ENCODE measurements at regions of chr16 and their contacts with region 1.

Region 1: DNA sequence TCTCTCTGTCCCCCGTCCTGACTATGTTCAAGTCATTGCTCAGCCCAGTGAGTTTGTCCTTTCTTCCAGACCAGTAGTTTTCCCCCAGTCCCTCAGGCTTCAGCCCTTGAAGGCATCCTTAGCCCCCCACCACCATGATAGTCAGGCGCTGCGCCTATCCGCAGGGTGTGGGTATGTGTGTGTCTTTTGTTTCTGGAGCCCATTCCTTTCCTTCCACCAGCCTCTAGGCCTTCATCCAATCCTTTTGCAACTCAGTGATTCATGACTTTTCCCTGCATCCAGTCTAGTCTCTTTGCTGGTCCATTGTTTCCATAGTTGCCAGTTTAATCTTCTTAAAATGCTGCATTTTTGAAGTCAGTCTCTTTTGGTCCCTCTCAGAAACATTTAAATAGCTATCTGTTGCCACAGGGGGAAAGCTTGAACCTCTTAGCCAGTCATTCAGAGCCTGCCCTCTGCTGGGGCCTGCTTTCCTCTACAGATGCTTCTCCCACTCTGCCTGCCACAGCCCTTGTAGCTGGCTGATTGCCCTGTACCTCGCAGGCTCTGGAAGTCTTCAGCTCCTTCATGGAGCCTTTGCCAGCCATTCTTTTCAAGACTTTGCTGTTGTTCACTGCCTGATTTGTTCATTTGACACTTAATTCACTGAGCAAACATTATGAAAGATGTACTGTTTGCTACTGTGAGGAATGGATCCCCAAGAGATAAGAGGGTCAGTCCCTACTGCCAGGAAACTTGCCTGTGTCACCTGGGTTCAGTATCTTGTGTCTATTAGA is 55.9 kb upstream of the ADCY7 start:
- DNase-seq: peak; percentile 87
- ATAC-seq: peak; percentile 91
- H3K4me3 ChIP-seq: no peak overlapping the region
- H3K27ac ChIP-seq: no peak overlapping the region
- H3K4me1 ChIP-seq: peaks cover 13% of the 10 kb centered on the region
- H3K27me3 ChIP-seq: no peaks in the 10 kb centered on the region
- CTCF ChIP-seq: peak; percentile 87
- POLR2A ChIP-seq: no peak
- RAD21 ChIP-seq: peak; percentile 87

Region 2: GRCh38 chr16:50024684-50025536 is 185.5 kb before region 1 on chr16 and contains the start of gene CNEP1R1:
- CTCF ChIA-PET with region 1: interaction called, 54 read pairs
- POLR2A ChIA-PET with region 1: no interaction called
- dilution Hi-C with region 1: no loop called
- in situ Hi-C with region 1: no loop called
- intact Hi-C with region 1: loop called (anchors 1 kb)
- DNase-seq: peak; percentile 95
- ATAC-seq: peak; percentile 97
- H3K4me3 ChIP-seq: peak within 1 kb of the TSS; percentile 100
- H3K27ac ChIP-seq: peak within 1 kb of the TSS; percentile 34
- H3K4me1 ChIP-seq: no peaks in the 10 kb centered on the region
- H3K27me3 ChIP-seq: peaks cover 4% of the 10 kb centered on the region; the same call in 1 of the 2 replicates
- CTCF ChIP-seq: peak; percentile 99
- POLR2A ChIP-seq: peak; percentile 45; the same call in 1 of the 2 replicates
- RAD21 ChIP-seq: peak; percentile 94
- total RNA-seq, gene CNEP1R1: 22.0 and 38.6 TPM in 2 replicates

Region 3: GRCh38 chr16:50152807-50153452 is 57.5 kb before region 1 on chr16 and contains the start of gene TENT4B:
- CTCF ChIA-PET with region 1: interaction called, 9 read pairs
- POLR2A ChIA-PET with region 1: interaction called, 3 read pairs
- dilution Hi-C with region 1: no loop called
- in situ Hi-C with region 1: no loop called
- intact Hi-C with region 1: loop called (anchors 1 kb)
- DNase-seq: peak; percentile 66
- ATAC-seq: peak; percentile 90
- H3K4me3 ChIP-seq: peak within 1 kb of the TSS; percentile 97
- H3K27ac ChIP-seq: peak within 1 kb of the TSS; percentile 98
- H3K4me1 ChIP-seq: peaks cover 5% of the 10 kb centered on the region
- H3K27me3 ChIP-seq: no peaks in the 10 kb centered on the region
- CTCF ChIP-seq: no peak
- POLR2A ChIP-seq: peak; percentile 85
- RAD21 ChIP-seq: no peak
- total RNA-seq, gene TENT4B: 7.0 and 12.5 TPM in 2 replicates

Region 4: GRCh38 chr16:50301626-50302471 is 91.4 kb after region 1 on chr16:
- CTCF ChIA-PET with region 1: no interaction called
- POLR2A ChIA-PET with region 1: no interaction called
- dilution Hi-C with region 1: no loop called
- in situ Hi-C with region 1: no loop called
- intact Hi-C with region 1: loop called (anchors 5 kb)
- DNase-seq: peak; percentile 86
- ATAC-seq: peak; percentile 81
- H3K4me3 ChIP-seq: no peak overlapping the region
- H3K27ac ChIP-seq: peak overlapping the region; percentile 83
- H3K4me1 ChIP-seq: peaks cover 43% of the 10 kb centered on the region
- H3K27me3 ChIP-seq: no peaks in the 10 kb centered on the region
- CTCF ChIP-seq: no peak
- POLR2A ChIP-seq: peak; percentile 40; the same call in 1 of the 2 replicates
- RAD21 ChIP-seq: no peak

Region 5: GRCh38 chr16:50509521-50510341 is 299.3 kb after region 1 on chr16:
- CTCF ChIA-PET with region 1: no interaction called
- POLR2A ChIA-PET with region 1: no interaction called
- dilution Hi-C with region 1: no loop called
- in situ Hi-C with region 1: no loop called
- intact Hi-C with region 1: loop called (anchors 2 kb)
- DNase-seq: peak; percentile 6
- ATAC-seq: no peak
- H3K4me3 ChIP-seq: no peak overlapping the region
- H3K27ac ChIP-seq: no peak overlapping the region
- H3K4me1 ChIP-seq: no peaks in the 10 kb centered on the region
- H3K27me3 ChIP-seq: peaks cover 2% of the 10 kb centered on the region; the same call in 1 of the 2 replicates
- CTCF ChIP-seq: peak; percentile 51
- POLR2A ChIP-seq: no peak
- RAD21 ChIP-seq: peak; percentile 40

Region 6: DNA sequence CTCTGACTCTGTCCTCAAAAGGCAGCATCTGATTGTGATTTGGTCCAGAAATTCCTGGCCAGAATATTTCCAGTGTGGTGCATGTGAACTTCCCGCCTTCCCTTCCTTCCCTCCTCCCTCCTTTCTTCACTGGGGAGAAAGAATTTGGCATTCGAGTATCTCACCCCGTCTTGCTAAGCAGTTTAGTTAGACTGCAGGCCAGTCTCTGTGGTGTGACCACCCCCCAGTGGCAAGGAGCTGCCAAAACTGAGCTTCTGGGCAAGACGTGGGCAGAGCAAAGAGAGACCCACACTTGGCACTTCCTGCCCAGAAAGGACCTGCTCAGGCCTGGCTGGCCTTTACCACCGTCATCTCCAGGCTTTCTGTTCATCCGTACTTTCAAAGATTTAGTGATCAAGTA is 434.3 kb after region 1 on chr16:
- CTCF ChIA-PET with region 1: no interaction called
- POLR2A ChIA-PET with region 1: no interaction called
- dilution Hi-C with region 1: no loop called
- in situ Hi-C with region 1: no loop called
- intact Hi-C with region 1: no loop called
- DNase-seq: no peak
- ATAC-seq: no peak
- H3K4me3 ChIP-seq: no peak overlapping the region
- H3K27ac ChIP-seq: no peak overlapping the region
- H3K4me1 ChIP-seq: no peaks in the 10 kb centered on the region
- H3K27me3 ChIP-seq: peaks cover 20% of the 10 kb centered on the region
- CTCF ChIP-seq: 0 out of 2 replicates have a peak, but pooled peaks have one; percentile 7
- POLR2A ChIP-seq: no peak
- RAD21 ChIP-seq: peak; percentile 20; the same call in 1 of the 2 replicates

Region 7: GRCh38 chr16:50781043-50781442 is 570.6 kb after region 1 on chr16:
- CTCF ChIA-PET with region 1: no interaction called
- POLR2A ChIA-PET with region 1: no interaction called
- dilution Hi-C with region 1: no loop called
- in situ Hi-C with region 1: loop called (anchors 25 kb)
- intact Hi-C with region 1: no loop called
- DNase-seq: peak; percentile 8
- ATAC-seq: no peak
- H3K4me3 ChIP-seq: no peak overlapping the region
- H3K27ac ChIP-seq: no peak overlapping the region
- H3K4me1 ChIP-seq: no peaks in the 10 kb centered on the region
- H3K27me3 ChIP-seq: no peaks in the 10 kb centered on the region
- CTCF ChIP-seq: peak; percentile 20; the same call in 1 of the 2 replicates
- POLR2A ChIP-seq: no peak
- RAD21 ChIP-seq: no peak